B cell (primary cell): ENCODE measurements at regions of chr4 and their contacts with region 1.

Region 1: DNA sequence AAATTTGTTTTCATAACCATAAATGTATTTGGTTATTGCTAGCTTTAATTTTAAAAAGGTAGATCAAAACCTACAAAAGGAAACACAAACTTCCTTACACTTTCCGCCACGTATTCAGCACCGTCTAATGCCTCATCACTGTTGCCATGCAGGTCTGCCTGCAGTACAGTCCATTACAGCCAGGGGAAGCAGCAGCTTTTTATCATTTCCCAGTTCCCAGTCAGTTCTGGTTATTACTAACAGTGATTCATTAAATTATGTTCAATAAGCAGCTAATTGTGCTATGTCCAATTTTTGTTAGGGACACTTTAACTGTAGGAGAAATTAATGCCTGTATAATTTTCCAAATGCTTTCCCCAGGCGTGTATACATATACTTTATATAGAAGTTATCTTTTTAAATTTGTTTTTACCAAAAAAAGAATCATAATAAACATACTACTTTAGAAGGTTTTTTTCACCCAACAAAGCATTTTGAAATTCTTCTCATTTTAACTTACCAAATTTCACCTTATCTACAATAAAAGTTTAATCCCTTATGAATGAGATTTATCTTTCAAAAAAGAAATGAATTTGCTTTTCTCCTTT is 93.3 kb downstream of the ANXA3 start:
- DNase-seq: peak; percentile 84
- ATAC-seq: peak; percentile 96
- H3K4me3 ChIP-seq: no peak overlapping the region
- H3K4me3 Mint-ChIP-seq: peak overlapping the region; percentile 29
- H3K27ac ChIP-seq: peak overlapping the region in 1 of 2 donors; percentile 53
- H3K27ac Mint-ChIP-seq: peak overlapping the region; percentile 57
- H3K4me1 ChIP-seq: peaks cover 62 to 73% of the 10 kb centered on the region in 2 donors
- H3K4me1 Mint-ChIP-seq: peaks cover 67% of the 10 kb centered on the region
- H3K27me3 ChIP-seq: no peaks in the 10 kb centered on the region
- H3K27me3 Mint-ChIP-seq: no peaks in the 10 kb centered on the region
- CTCF ChIP-seq: peak; percentile 88

Region 2: GRCh38 chr4:78612398-78613178 is 32.2 kb before region 1 on chr4:
- CTCF ChIA-PET with region 1: interaction called, 84 read pairs
- POLR2A ChIA-PET with region 1: no interaction called
- intact Hi-C with region 1: loop called (anchors 2 kb)
- DNase-seq: peak; percentile 72
- ATAC-seq: peak; percentile 40
- H3K4me3 ChIP-seq: peak overlapping the region in 1 of 5 experiments; percentile 36
- H3K4me3 Mint-ChIP-seq: peak overlapping the region; percentile 49
- H3K27ac ChIP-seq: peak overlapping the region; percentile 11 to 81
- H3K27ac Mint-ChIP-seq: peak overlapping the region; percentile 86
- H3K4me1 ChIP-seq: peaks cover 55% of the 10 kb centered on the region in 2 donors
- H3K4me1 Mint-ChIP-seq: peaks cover 60% of the 10 kb centered on the region
- H3K27me3 ChIP-seq: no peaks in the 10 kb centered on the region
- H3K27me3 Mint-ChIP-seq: no peaks in the 10 kb centered on the region
- CTCF ChIP-seq: peak; percentile 77

Region 3: GRCh38 chr4:78656968-78657445 is 12.2 kb after region 1 on chr4:
- CTCF ChIA-PET with region 1: interaction called, 15 read pairs
- POLR2A ChIA-PET with region 1: interaction called, 9 read pairs
- intact Hi-C with region 1: loop called (anchors 2 kb)
- DNase-seq: no peak
- ATAC-seq: no peak
- H3K4me3 ChIP-seq: peak overlapping the region in 4 of 5 experiments; percentile 8 to 52 (median 29)
- H3K4me3 Mint-ChIP-seq: peak overlapping the region; percentile 72
- H3K27ac ChIP-seq: peak overlapping the region; percentile 47 to 76
- H3K27ac Mint-ChIP-seq: peak overlapping the region; percentile 67
- H3K4me1 ChIP-seq: peaks cover 38 to 43% of the 10 kb centered on the region in 2 donors
- H3K4me1 Mint-ChIP-seq: peaks cover 45% of the 10 kb centered on the region
- H3K27me3 ChIP-seq: no peaks in the 10 kb centered on the region
- H3K27me3 Mint-ChIP-seq: no peaks in the 10 kb centered on the region
- CTCF ChIP-seq: no peak

Region 4: GRCh38 chr4:78667764-78668163 is 22.9 kb after region 1 on chr4:
- CTCF ChIA-PET with region 1: interaction called, 10 read pairs
- POLR2A ChIA-PET with region 1: interaction called, 4 read pairs
- intact Hi-C with region 1: no loop called
- DNase-seq: peak; percentile 47
- ATAC-seq: peak; percentile 62
- H3K4me3 ChIP-seq: peak overlapping the region in 2 of 5 experiments; percentile 26 to 28
- H3K4me3 Mint-ChIP-seq: peak overlapping the region; percentile 80
- H3K27ac ChIP-seq: peak overlapping the region; percentile 50 to 73
- H3K27ac Mint-ChIP-seq: peak overlapping the region; percentile 85
- H3K4me1 ChIP-seq: peaks cover 75 to 78% of the 10 kb centered on the region in 2 donors
- H3K4me1 Mint-ChIP-seq: peaks cover 88% of the 10 kb centered on the region
- H3K27me3 ChIP-seq: no peaks in the 10 kb centered on the region
- H3K27me3 Mint-ChIP-seq: no peaks in the 10 kb centered on the region
- CTCF ChIP-seq: no peak

Region 5: DNA sequence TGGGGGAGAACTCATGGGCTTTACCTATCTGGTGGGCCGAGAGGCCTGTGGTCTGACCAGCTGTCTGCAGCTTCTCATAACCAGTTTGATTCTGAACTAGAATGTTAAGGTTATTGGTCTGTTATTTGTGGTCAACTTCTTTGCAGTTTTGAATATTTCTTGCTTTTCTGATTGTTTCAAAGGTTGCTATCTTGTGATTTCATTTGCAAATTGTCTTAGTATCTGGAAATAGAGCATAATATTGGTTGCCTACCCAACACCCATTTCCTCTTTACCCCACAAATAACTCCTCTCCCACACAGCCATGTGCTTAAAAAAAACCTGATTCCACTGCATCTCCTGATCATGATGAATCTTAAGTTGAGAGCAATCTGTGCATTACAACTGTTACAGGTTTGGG is 92.2 kb after region 1 on chr4:
- CTCF ChIA-PET with region 1: interaction called, 11 read pairs
- POLR2A ChIA-PET with region 1: no interaction called
- intact Hi-C with region 1: no loop called
- DNase-seq: no peak
- ATAC-seq: peak; percentile 32
- H3K4me3 ChIP-seq: no peak overlapping the region
- H3K4me3 Mint-ChIP-seq: peak overlapping the region; percentile 16
- H3K27ac ChIP-seq: peak overlapping the region; percentile 24 to 67
- H3K27ac Mint-ChIP-seq: peak overlapping the region; percentile 90
- H3K4me1 ChIP-seq: peaks cover 41 to 49% of the 10 kb centered on the region in 2 donors
- H3K4me1 Mint-ChIP-seq: peaks cover 60% of the 10 kb centered on the region
- H3K27me3 ChIP-seq: no peaks in the 10 kb centered on the region
- H3K27me3 Mint-ChIP-seq: no peaks in the 10 kb centered on the region
- CTCF ChIP-seq: no peak

Region 6: GRCh38 chr4:78864405-78865024 is 219.7 kb after region 1 on chr4:
- CTCF ChIA-PET with region 1: interaction called, 16 read pairs
- POLR2A ChIA-PET with region 1: no interaction called
- intact Hi-C with region 1: loop called (anchors 10 kb)
- DNase-seq: peak; percentile 84
- ATAC-seq: peak; percentile 73
- H3K4me3 ChIP-seq: no peak overlapping the region
- H3K4me3 Mint-ChIP-seq: peak overlapping the region; percentile 8
- H3K27ac ChIP-seq: no peak overlapping the region
- H3K27ac Mint-ChIP-seq: peak overlapping the region; percentile 46
- H3K4me1 ChIP-seq: peaks cover 6 to 7% of the 10 kb centered on the region in 2 donors
- H3K4me1 Mint-ChIP-seq: peaks cover 17% of the 10 kb centered on the region
- H3K27me3 ChIP-seq: no peaks in the 10 kb centered on the region
- H3K27me3 Mint-ChIP-seq: no peaks in the 10 kb centered on the region
- CTCF ChIP-seq: peak; percentile 84